HEK293T (cell line): ENCODE measurements at regions of chr11 and their contacts with region 1.

Region 1: GRCh38 chr11:82229341-82229740 is 504.3 kb downstream of the FAM181B start:
- DNase-seq: peak; percentile 8

Region 2: DNA sequence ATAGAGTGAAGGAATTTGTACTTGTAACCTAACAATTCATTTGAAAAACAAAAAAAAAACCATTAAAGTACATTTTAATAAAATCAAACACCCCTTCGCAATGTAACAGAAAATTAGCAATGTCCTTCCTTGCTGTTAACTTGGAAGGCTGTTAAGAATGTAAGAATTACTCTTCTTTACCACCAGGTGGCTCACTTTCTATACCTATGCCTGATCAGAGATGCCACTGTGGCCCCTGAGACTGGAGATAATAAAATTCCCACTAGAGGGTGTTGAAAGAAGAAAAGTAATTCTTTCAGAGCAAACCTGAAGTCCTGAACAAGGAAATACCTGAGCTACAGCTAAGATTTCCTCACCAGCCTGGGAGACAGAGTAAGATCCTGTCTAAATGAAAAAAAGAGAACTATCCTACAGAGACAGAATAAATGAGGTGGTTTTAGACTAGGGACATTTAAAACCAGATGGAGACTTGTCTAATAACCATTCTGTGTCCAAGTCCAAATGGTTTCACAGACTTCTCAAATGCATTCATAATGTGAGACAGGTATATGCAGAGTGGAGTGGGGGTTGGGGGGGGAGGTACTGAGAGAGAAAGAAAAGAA is 585.0 kb before region 1 on chr11:
- CTCF ChIA-PET with region 1: interaction called, 12 read pairs
- POLR2A ChIA-PET with region 1: no interaction called
- DNase-seq: peak; percentile 28

Region 3: DNA sequence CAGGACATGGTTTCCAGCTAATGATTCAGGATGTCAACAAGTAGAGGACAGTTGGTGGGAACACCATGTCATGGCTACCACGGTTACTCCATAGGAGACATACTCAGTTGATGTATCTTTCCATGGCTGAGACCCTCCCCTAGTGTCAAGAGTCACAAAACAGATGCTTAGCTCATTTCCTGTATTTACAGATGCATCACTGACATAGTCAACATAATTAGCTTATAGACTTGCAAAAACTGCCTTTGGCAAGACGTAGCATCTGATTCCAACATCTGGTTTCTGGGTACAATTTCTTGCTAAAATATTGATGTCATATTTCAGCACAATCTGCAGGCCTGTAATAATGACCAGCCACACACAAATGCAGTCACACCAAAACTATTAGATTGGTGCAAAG is 46.0 kb before region 1 on chr11:
- CTCF ChIA-PET with region 1: no interaction called
- POLR2A ChIA-PET with region 1: no interaction called
- DNase-seq: no peak